ENCODE measurements at regions of chr16 and their contacts with region 1.

Region 1: GRCh38 chr16:27628241-27628942 is 78.4 kb downstream of the KATNIP start:
- DNase-seq: no peak
- H3K4me3 ChIP-seq: no peak overlapping the region
- H3K27me3 ChIP-seq: no peaks in the 10 kb centered on the region
- CTCF ChIP-seq: no peak

Region 2: DNA sequence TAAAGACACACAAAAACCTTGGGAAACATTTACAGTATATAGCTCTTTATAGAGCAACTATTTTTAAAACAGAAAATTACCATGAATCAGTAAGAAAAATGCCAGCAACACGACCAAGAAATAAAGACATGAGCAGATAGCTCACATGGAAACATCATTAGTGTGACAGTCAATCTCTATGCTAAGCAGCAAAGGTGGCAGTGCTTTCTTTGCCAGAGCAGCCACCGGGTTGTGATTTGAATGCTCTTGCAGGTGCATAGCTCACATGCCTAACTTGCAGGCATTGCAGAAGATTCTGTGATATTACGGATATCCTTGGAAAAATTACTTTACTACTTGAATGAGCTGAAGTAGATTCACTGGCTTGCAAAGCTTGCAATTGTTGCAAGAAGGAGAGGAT is 1214.6 kb before region 1 on chr16:
- CTCF ChIA-PET with region 1: no interaction called
- POLR2A ChIA-PET with region 1: interaction called, 13 read pairs
- DNase-seq: no peak
- H3K4me3 ChIP-seq: no peak overlapping the region
- H3K27me3 ChIP-seq: no peaks in the 10 kb centered on the region
- CTCF ChIP-seq: no peak

Measured in BJ (cell line).